Lower lobe of right lung (tissue), 2 donors: ENCODE measurements at regions of chr9 and their contacts with region 1.

Region 1: GRCh38 chr9:74773886-74774479 is 113.7 kb downstream of the TRPM6 start:
- DNase-seq: peak; percentile 76
- ATAC-seq: peak; percentile 78 to 79
- H3K4me3 ChIP-seq: no peak overlapping the region
- H3K27ac ChIP-seq: no peak overlapping the region
- H3K4me1 ChIP-seq: no peaks in the 10 kb centered on the region
- H3K27me3 ChIP-seq: no peaks in the 10 kb centered on the region
- CTCF ChIP-seq: peak; percentile 91

Region 2: GRCh38 chr9:75001719-75002422 is 227.9 kb after region 1 on chr9:
- intact Hi-C with region 1: loop called (anchors 5 kb)
- DNase-seq: no peak
- ATAC-seq: peak; percentile 88 to 91
- H3K4me3 ChIP-seq: no peak overlapping the region
- H3K27ac ChIP-seq: no peak overlapping the region
- H3K4me1 ChIP-seq: peaks cover 6% of the 10 kb centered on the region
- H3K27me3 ChIP-seq: no peaks in the 10 kb centered on the region
- CTCF ChIP-seq: peak; percentile 71

Region 3: DNA sequence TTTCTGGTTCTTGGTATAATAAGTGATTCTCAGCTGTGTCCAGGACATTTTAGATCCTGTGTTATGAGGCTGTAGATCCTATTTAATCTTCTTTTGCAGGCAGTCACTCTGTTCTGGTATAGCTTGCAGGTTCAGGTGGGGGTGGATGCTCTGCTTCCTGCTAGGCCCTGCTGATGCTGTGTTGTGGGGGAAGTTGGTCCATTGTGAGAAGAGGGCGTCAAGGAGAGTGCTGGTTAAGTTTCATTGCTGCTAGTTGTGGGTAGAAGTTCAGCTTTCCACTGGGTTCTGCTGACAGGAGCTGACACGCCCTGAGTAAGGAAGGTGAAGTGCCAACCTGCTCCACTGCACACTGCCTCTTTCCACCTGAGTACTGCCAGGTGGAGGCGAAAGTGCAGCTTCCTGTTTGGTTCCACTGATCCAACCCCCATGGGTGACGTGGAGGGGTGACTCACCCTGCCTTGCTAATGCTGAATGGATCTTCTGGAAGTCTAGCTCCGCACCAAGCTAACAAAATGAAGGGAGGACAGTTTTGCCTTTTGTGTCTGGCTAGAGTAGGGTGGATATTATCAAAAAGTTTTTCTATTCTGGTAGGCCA is 297.6 kb after region 1 on chr9:
- intact Hi-C with region 1: loop called (anchors 10 kb)
- DNase-seq: peak; percentile 81
- ATAC-seq: peak; percentile 94 to 96
- H3K4me3 ChIP-seq: no peak overlapping the region
- H3K27ac ChIP-seq: no peak overlapping the region
- H3K4me1 ChIP-seq: no peaks in the 10 kb centered on the region
- H3K27me3 ChIP-seq: no peaks in the 10 kb centered on the region
- CTCF ChIP-seq: no peak

Region 4: DNA sequence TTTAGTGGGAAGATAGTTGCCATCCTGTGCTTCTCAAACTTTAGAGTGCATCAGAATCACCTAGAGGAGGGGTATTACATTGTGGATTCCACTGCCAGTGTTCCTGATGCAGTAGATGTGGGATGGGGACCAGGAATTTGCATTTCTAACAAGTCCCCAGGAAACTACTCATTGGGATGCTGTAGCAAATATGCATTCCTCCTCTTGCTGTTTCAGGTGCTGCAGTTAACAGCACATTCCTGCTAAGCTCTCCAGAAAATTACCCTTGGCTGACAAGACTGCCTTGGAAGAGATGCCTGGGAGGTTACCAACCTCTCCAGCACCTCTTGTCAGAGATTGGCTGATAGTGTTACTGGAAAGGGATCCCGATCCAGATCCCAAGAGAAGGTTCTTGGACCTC is 584.9 kb after region 1 on chr9:
- intact Hi-C with region 1: no loop called
- DNase-seq: no peak
- ATAC-seq: no peak
- H3K4me3 ChIP-seq: no peak overlapping the region
- H3K27ac ChIP-seq: no peak overlapping the region
- H3K4me1 ChIP-seq: no peaks in the 10 kb centered on the region
- H3K27me3 ChIP-seq: no peaks in the 10 kb centered on the region
- CTCF ChIP-seq: no peak